Endothelial cell of umbilical vein (primary cell): ENCODE measurements at regions of chr15 and their contacts with region 1.

Region 1: DNA sequence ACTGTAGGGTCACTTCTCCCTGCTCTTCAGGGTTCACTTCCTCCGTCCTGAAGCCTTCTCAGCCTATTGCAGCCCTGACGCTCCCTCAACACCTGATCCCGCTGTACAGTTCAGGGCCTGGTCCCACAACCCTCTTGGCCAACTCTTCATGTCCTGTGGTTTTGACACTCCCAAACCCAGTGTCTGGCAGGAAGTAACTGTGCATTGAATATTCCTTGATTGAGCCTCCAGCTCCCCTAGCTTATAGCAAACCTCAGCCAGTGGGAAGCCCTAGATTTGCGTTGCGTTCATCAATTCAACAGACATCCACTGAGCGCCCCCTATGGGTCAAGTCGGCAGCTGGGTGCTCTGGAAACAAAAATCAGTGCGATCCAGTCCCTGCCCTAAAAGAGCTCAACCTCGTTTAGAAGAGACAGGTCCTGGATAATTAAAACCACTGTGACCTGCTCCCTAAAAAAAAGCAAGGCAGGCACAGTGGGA is 13.5 kb downstream of the UBAP1L start:
- DNase-seq: peak; percentile 53
- H3K4me3 ChIP-seq: peak overlapping the region in 1 of 3 experiments; percentile 13
- H3K27ac ChIP-seq: no peak overlapping the region
- H3K4me1 ChIP-seq: peaks cover 2% of the 10 kb centered on the region
- H3K27me3 ChIP-seq: no peaks in the 10 kb centered on the region
- CTCF ChIP-seq: peak; percentile 82 to 87
- POLR2A ChIP-seq: no peak

Region 2: GRCh38 chr15:65008983-65009382 is 92.5 kb before region 1 on chr15:
- CTCF ChIA-PET with region 1: no interaction called
- POLR2A ChIA-PET with region 1: no interaction called
- dilution Hi-C with region 1: no loop called
- intact Hi-C with region 1: no loop called
- DNase-seq: no peak
- H3K4me3 ChIP-seq: no peak overlapping the region
- H3K27ac ChIP-seq: no peak overlapping the region
- H3K4me1 ChIP-seq: no peaks in the 10 kb centered on the region
- H3K27me3 ChIP-seq: no peaks in the 10 kb centered on the region
- CTCF ChIP-seq: no peak
- POLR2A ChIP-seq: no peak

Region 3: DNA sequence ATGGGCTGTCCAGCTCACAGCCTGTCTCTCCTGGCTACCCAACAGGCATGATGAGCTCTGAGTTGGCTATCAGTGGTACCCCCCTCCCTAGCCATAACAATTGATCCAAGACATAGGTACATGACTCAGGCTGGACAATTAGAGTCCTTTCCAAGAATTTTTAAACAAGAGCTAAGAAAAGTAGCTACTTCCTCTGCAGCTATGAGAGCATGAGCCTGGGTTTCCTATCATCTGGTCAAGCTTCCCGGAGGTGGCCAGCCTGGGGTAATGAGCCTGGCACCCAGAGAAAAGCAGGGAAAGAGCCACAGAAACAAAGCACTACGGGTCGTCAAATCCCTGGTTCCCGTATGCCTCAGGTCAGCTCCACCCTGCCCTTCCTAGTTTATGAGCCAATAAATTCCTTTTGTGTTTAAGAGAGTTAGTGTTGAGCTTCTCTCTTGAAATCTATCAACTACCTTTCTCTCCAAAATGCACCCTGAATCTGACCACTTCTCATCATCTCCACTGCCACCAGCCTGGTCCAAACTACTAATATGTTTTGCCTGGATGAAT is 58.6 kb before region 1 on chr15:
- CTCF ChIA-PET with region 1: interaction called, 15 read pairs
- POLR2A ChIA-PET with region 1: no interaction called
- dilution Hi-C with region 1: no loop called
- intact Hi-C with region 1: no loop called
- DNase-seq: no peak
- H3K4me3 ChIP-seq: no peak overlapping the region
- H3K27ac ChIP-seq: no peak overlapping the region
- H3K4me1 ChIP-seq: no peaks in the 10 kb centered on the region
- H3K27me3 ChIP-seq: no peaks in the 10 kb centered on the region
- CTCF ChIP-seq: no peak
- POLR2A ChIP-seq: no peak

Region 4: DNA sequence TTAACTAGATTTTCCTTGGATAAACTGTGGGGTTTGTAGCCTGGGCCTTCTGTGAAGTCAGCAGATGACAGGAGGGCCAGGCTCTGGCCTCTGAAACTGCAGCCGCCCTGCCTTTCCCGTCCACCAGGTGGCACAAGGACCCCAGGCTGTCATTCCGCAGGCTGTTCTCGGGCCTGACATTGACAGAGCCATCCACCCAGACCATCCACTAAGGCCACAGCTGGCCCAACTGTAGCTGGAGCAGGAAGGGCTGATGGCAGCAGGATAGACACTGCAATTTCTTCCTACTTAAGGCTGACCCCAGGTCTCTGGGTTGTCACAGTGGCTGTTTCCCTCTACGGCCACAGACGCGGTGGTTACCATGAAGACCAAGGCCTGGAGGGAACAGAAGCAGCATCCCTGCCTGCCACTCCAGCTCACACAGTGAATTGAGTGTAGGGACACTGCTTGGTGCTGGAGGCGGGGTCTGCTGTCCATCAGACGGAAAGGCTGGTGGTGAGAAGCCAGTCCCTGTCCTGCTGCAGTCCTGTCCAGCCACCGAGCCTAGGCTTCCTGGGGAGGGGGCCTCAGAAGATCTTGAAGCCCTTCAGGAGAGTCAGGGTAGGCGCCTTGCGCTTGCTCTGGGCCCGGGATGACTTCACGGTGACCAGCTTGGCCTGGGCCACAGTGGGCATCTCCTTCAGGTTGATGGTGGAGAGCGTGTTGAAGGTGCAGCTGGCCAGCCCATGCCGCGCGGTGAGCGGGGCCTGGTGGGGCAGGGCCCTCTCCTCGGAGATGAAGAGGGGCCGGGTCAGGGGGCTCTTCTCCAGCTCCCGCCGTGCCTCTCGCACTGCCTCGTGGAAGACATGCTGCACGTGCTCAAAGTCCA is 46.9 kb before region 1 on chr15:
- CTCF ChIA-PET with region 1: interaction called, 59 read pairs
- POLR2A ChIA-PET with region 1: no interaction called
- dilution Hi-C with region 1: no loop called
- intact Hi-C with region 1: loop called (anchors 1 kb)
- DNase-seq: peak; percentile 61
- H3K4me3 ChIP-seq: no peak overlapping the region
- H3K27ac ChIP-seq: no peak overlapping the region
- H3K4me1 ChIP-seq: peaks cover 9% of the 10 kb centered on the region
- H3K27me3 ChIP-seq: no peaks in the 10 kb centered on the region
- CTCF ChIP-seq: peak; percentile 91 to 96
- POLR2A ChIP-seq: no peak

Region 5: GRCh38 chr15:65077981-65078352 is 23.5 kb before region 1 on chr15:
- CTCF ChIA-PET with region 1: interaction called, 64 read pairs
- POLR2A ChIA-PET with region 1: no interaction called
- dilution Hi-C with region 1: no loop called
- intact Hi-C with region 1: no loop called
- DNase-seq: peak; percentile 58
- H3K4me3 ChIP-seq: no peak overlapping the region
- H3K27ac ChIP-seq: no peak overlapping the region
- H3K4me1 ChIP-seq: no peaks in the 10 kb centered on the region
- H3K27me3 ChIP-seq: peaks cover 34 to 35% of the 10 kb centered on the region in 2 experiments
- CTCF ChIP-seq: peak; percentile 60 to 85
- POLR2A ChIP-seq: no peak

Region 6: DNA sequence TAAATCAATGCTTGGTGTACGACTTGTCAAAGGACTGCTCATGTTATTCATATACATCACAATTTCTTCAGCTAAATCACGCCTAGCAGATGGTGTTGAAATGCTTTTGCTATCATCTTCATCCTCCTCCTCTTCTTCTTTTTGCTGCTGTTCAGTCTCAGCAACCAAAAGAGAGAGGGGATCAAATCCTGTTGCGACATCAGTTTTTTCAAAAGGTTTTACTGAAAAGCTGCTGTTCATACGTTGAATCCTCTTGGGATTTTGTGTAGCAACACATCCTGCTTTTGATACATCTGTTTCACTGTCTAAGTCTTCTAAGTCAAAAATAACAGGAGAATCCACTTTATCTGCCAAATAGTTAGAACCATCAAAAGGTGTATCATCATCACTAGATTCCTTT is 589.3 kb after region 1 on chr15:
- CTCF ChIA-PET with region 1: no interaction called
- POLR2A ChIA-PET with region 1: no interaction called
- dilution Hi-C with region 1: no loop called
- intact Hi-C with region 1: no loop called
- DNase-seq: no peak
- H3K4me3 ChIP-seq: no peak overlapping the region
- H3K27ac ChIP-seq: no peak overlapping the region
- H3K4me1 ChIP-seq: no peaks in the 10 kb centered on the region
- H3K27me3 ChIP-seq: no peaks in the 10 kb centered on the region
- CTCF ChIP-seq: no peak
- POLR2A ChIP-seq: no peak